Activated CD8-positive, alpha-beta T cell treated with anti-CD3 and anti-CD28 coated beads, Interleukin-2, amount 10 ng/mL, durations not matched to agents 7 days and 5 days (primary cell): ENCODE measurements at regions of chr22 and their contacts with region 1.

Region 1: GRCh38 chr22:40645579-40646197 is 9.2 kb upstream of the MRTFA start:
- DNase-seq: no peak
- ATAC-seq: no peak
- H3K4me3 Mint-ChIP-seq: no peak overlapping the region
- H3K27ac Mint-ChIP-seq: no peak overlapping the region
- H3K4me1 Mint-ChIP-seq: peaks cover 12% of the 10 kb centered on the region
- H3K27me3 Mint-ChIP-seq: peaks cover 2% of the 10 kb centered on the region

Region 2: DNA sequence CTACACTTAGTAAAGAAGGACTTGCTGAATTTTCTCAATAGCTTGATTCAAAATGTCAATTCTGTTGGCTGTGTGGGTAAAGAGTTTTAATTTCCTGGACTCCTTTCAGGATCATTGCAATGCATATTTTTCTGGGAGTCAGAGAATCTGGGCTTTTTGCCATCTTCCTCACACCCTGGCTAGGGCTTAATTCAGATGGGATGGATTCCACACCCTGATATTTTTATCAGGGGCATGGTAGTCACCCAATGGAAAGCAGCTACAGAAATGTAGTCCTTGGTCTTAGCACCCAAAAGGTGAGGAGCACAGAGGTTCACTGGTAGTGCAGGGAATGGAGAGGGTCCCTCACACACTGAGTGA is 196.0 kb before region 1 on chr22:
- CTCF ChIA-PET with region 1: interaction called, 12 read pairs
- POLR2A ChIA-PET with region 1: no interaction called
- DNase-seq: no peak
- ATAC-seq: no peak
- H3K4me3 Mint-ChIP-seq: no peak overlapping the region
- H3K27ac Mint-ChIP-seq: no peak overlapping the region
- H3K4me1 Mint-ChIP-seq: peaks cover 47% of the 10 kb centered on the region
- H3K27me3 Mint-ChIP-seq: no peaks in the 10 kb centered on the region

Region 3: DNA sequence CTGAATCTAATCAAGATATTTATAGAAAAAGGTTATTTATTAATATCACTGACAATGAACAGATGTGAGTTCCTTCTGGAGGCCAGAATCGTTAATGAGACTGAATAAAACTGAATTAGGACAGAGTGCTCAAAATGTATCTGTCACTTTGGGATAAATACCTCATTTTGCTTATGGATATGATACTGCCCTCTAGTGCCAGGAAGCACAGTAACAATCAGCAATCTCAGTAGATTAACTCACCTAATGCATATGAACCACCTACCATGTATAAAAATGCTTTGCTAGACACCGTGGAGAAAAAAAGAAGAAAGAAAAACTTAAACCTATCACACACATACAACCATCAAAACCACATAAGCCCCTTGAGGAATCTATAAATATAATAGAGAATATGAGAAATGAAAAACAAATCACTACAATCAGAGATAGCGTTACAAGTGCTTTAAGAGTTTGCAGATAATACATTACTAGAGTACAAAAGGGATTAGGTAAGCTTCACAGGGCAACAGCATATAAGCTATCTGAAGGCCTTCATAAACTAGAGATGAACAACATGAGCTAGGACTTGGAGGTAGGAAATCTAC is 157.9 kb before region 1 on chr22:
- CTCF ChIA-PET with region 1: interaction called, 19 read pairs
- POLR2A ChIA-PET with region 1: no interaction called
- DNase-seq: peak; percentile 29
- ATAC-seq: peak; percentile 62
- H3K4me3 Mint-ChIP-seq: no peak overlapping the region
- H3K27ac Mint-ChIP-seq: no peak overlapping the region
- H3K4me1 Mint-ChIP-seq: peaks cover 34% of the 10 kb centered on the region
- H3K27me3 Mint-ChIP-seq: no peaks in the 10 kb centered on the region

Region 4: GRCh38 chr22:40533712-40534378 is 111.8 kb before region 1 on chr22:
- CTCF ChIA-PET with region 1: interaction called, 229 read pairs
- POLR2A ChIA-PET with region 1: interaction called, 7 read pairs
- DNase-seq: peak; percentile 79
- ATAC-seq: peak; percentile 93
- H3K4me3 Mint-ChIP-seq: peak overlapping the region; percentile 89
- H3K27ac Mint-ChIP-seq: peak overlapping the region; percentile 92
- H3K4me1 Mint-ChIP-seq: peaks cover 55% of the 10 kb centered on the region
- H3K27me3 Mint-ChIP-seq: no peaks in the 10 kb centered on the region

Region 5: GRCh38 chr22:40898850-40899357 is 253.2 kb after region 1 on chr22:
- CTCF ChIA-PET with region 1: interaction called, 24 read pairs
- POLR2A ChIA-PET with region 1: interaction called, 4 read pairs
- DNase-seq: peak; percentile 24
- ATAC-seq: peak; percentile 33
- H3K4me3 Mint-ChIP-seq: no peak overlapping the region
- H3K27ac Mint-ChIP-seq: no peak overlapping the region
- H3K4me1 Mint-ChIP-seq: peaks cover 8% of the 10 kb centered on the region
- H3K27me3 Mint-ChIP-seq: no peaks in the 10 kb centered on the region